Heart right ventricle (tissue), 16 donors: ENCODE measurements at regions of chr18 and their contacts with region 1.

Region 1: GRCh38 chr18:57446322-57446721 is 11.1 kb downstream of the ONECUT2 start:
- DNase-seq: no peak
- ATAC-seq: no peak
- H3K4me3 ChIP-seq: no peak overlapping the region
- H3K27ac ChIP-seq: no peak overlapping the region
- H3K4me1 ChIP-seq: peaks cover 0 to 4% (median 0%) of the 10 kb centered on the region in 9 donors
- H3K27me3 ChIP-seq: peaks cover 18 to 94% (median 82%) of the 10 kb centered on the region in 7 donors
- CTCF ChIP-seq: peak in 8 of 9 donors; percentile 7 to 49 (median 34)

Region 2: GRCh38 chr18:56748698-56749268 is 697.5 kb before region 1 on chr18:
- intact Hi-C with region 1: loop called in 2 of 10 experiments (anchors 10 kb)
- DNase-seq: peak in 1 of 2 donors; percentile 6
- ATAC-seq: no peak
- H3K4me3 ChIP-seq: no peak overlapping the region
- H3K27ac ChIP-seq: no peak overlapping the region
- H3K4me1 ChIP-seq: peaks cover 0 to 25% (median 13%) of the 10 kb centered on the region in 9 donors
- H3K27me3 ChIP-seq: no peaks in the 10 kb centered on the region
- CTCF ChIP-seq: peak; percentile 20 to 82 (median 65)

Region 3: DNA sequence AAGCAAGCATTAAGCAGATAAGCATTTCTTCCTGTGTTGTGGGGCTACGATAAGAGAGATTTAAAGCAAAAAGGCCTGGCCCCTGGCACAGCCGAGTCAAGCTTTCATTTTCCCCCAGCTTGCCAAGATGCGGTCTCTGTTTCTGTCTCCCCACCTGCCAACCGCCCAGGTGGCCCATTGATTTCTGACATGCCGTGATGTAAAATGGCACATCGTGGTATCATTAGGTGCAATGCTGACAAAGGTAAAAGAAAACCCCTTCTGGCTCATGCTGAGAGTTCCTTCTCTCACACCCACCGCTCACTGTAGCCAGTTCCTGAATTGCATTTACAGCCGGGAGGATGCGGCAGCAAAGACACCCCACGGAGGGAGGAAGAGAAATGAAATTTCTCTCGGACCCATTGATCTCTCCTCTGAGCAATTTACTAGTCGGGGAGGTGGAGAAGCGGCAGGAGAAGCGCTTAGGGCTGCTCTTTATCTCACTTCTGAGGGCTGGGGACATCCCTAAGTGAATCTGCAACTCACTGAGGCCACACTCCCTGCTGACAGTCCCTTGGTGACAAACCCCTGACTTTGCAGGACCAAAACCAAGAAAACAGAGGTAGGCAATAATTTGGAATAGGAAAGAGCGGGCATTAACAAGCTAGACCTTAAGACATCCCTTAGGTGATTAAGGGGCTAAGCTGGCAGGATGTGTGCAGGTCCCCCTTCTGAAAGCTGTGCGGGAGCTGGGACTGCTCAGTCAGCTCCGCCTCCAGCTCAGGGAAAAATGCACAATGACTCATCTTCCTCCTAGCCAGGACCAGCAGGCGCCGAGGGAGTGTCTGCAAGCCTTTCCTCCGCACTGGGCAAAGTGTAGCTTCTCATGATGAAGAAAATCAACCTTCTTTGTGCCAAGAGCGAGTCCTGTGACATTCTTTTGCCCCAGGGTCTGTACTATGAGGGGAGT is 236.3 kb before region 1 on chr18:
- intact Hi-C with region 1: no loop called
- DNase-seq: peak; percentile 22 to 26
- ATAC-seq: peak; percentile 64 to 96 (median 80)
- H3K4me3 ChIP-seq: peak overlapping the region in 3 of 10 donors; percentile 11 to 17 (median 12)
- H3K27ac ChIP-seq: no peak overlapping the region
- H3K4me1 ChIP-seq: peaks cover 0 to 14% (median 9%) of the 10 kb centered on the region in 9 donors
- H3K27me3 ChIP-seq: peaks cover 0 to 52% (median 28%) of the 10 kb centered on the region in 7 donors
- CTCF ChIP-seq: no peak